PC-3 (cell line): ENCODE measurements at regions of chr16 and their contacts with region 1.

Region 1: DNA sequence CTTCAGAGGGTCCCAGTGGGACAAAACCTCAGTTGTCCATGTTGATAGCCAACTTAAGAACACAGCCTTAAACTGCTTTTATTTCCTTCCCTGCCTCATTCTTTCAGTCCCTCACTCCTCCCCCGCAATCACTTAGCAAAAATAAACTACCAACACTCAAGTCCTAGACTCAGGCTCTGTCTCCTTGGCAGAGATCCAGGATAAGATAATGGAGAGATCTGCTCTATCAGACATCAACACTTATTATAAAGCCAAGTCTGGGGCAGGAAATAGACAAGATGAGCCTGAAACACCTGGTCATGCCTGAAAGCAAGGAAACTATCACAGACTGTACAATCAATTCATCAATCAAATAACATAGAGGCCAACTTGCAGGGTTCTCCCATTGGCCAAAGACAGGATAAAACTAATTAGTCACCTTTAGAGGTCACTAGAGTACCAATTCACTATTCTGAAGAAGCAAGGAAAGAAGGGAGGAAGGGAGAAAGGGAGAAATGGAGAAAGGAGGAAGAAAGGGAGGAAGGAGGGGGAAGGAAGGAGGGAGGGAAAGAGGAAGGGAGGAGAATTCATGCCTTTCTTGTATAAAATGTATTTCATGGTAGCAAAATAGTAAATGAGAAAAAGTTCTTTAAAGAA is 15.7 kb downstream of the HYDIN start:
- DNase-seq: peak; percentile 14
- ATAC-seq: peak; percentile 42
- H3K4me3 ChIP-seq: no peak overlapping the region
- H3K27ac ChIP-seq: no peak overlapping the region
- H3K4me1 ChIP-seq: no peaks in the 10 kb centered on the region
- H3K27me3 ChIP-seq: peaks cover 10% of the 10 kb centered on the region; the same call in 1 of the 2 replicates
- CTCF ChIP-seq: peak; percentile 36; the same call in 1 of the 2 replicates

Region 2: DNA sequence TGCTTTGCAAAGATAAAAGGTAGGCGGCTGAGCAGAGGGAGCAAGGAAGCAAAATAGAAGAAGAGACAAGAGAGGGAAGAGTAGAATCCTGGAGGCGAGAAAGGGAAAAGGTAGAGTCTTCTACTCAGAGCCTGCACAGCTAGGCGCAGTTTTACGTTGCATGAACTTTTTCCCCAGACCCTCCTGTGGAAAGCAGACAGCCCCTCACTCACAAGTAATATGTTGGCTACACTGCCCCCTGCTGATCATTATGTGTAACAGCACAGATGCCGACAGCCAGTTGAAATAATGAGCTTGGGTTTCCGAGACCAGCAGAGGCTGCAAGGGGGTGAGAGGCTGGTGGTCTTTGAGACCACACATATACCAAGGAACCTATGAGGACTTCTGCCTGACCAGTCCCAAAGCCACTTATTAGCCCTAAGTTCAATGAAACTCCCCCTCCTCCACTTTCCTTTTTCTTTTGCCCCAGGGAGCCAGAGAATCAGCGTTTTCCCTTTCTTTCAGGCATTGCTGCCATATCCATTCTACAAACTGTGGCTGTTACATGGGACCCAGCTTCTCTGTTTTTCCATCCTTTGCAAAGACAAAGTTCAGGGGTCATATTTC is 96.8 kb after region 1 on chr16:
- CTCF ChIA-PET with region 1: no interaction called
- POLR2A ChIA-PET with region 1: no interaction called
- intact Hi-C with region 1: loop called (anchors 5 kb)
- DNase-seq: peak; percentile 17
- ATAC-seq: no peak
- H3K4me3 ChIP-seq: no peak overlapping the region
- H3K27ac ChIP-seq: no peak overlapping the region
- H3K4me1 ChIP-seq: no peaks in the 10 kb centered on the region
- H3K27me3 ChIP-seq: no peaks in the 10 kb centered on the region
- CTCF ChIP-seq: peak; percentile 79

Region 3: DNA sequence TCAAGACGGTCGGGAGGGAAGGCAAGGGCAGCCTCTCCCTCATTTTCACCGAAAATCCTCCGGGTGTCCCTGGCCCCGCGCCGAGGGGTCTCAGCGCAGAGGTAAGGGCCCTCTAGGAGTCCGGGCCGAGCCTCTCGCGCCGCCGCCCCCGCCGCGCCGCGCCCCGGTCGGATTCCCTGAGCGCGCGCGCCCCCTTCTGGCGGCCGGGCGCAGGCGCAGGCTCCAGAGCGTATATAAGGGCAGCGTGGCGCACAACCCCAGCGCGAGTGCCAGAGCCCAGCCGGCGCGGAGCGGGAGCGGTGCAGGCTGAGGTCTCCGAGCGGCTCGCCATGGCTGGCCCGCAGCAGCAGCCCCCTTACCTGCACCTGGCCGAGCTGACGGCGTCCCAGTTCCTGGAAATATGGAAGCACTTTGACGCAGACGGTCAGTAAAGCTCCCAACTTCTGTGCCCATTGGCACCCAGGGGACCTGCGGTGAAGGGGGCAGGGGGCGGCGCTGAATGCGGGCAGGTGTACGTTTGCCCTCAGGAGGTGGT is 143.7 kb after region 1 on chr16 and contains the start of gene CALB2:
- CTCF ChIA-PET with region 1: no interaction called
- POLR2A ChIA-PET with region 1: no interaction called
- intact Hi-C with region 1: loop called (anchors 2 kb)
- DNase-seq: peak; percentile 70
- ATAC-seq: peak; percentile 81
- H3K4me3 ChIP-seq: peak within 1 kb of the TSS; percentile 59; the same call in 1 of the 2 replicates
- H3K27ac ChIP-seq: no peak within 1 kb of the TSS
- H3K4me1 ChIP-seq: peaks cover 12% of the 10 kb centered on the region; the same call in 1 of the 2 replicates
- H3K27me3 ChIP-seq: no peaks in the 10 kb centered on the region
- CTCF ChIP-seq: peak; percentile 72
- total RNA-seq, gene CALB2: 0.47 TPM in 1 of 2 replicates, not detected in the other